Thyroid gland (tissue), 4 donors: ENCODE measurements at regions of chr2 and their contacts with region 1.

Region 1: DNA sequence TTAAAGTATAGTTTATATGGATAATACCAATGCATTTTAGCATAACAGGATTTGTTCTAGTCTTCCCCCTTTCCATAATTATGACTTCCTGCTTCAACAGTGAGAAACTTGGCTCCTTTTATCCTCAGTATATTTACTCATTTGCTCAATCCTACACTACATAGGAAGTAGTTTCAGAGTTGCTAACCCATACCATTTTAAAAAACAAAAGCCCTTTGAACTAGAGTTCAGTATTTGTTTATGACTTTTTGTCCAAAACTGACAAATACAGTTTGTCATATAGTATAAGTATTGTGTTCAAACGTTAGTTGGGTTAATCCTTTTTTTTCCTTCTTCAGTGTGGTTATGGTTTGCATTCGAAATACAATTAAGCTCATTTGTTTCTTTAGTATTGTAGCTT is 5.9 kb upstream of the DNAJC27 start:
- DNase-seq: no peak
- H3K4me3 ChIP-seq: no peak overlapping the region
- H3K27ac ChIP-seq: no peak overlapping the region
- H3K4me1 ChIP-seq: peaks cover 0 to 6% of the 10 kb centered on the region in 2 donors
- H3K27me3 ChIP-seq: no peaks in the 10 kb centered on the region
- CTCF ChIP-seq: no peak
- POLR2A ChIP-seq: no peak

Region 2: GRCh38 chr2:24438106-24438505 is 539.5 kb before region 1 on chr2:
- intact Hi-C with region 1: no loop called
- DNase-seq: no peak
- H3K4me3 ChIP-seq: no peak overlapping the region
- H3K27ac ChIP-seq: no peak overlapping the region
- H3K4me1 ChIP-seq: peaks cover 12 to 16% of the 10 kb centered on the region in 2 donors
- H3K27me3 ChIP-seq: no peaks in the 10 kb centered on the region
- CTCF ChIP-seq: no peak
- POLR2A ChIP-seq: no peak

Region 3: GRCh38 chr2:24920098-24920808 is 57.4 kb before region 1 on chr2 and contains the start of gene ADCY3:
- intact Hi-C with region 1: no loop called
- DNase-seq: peak; percentile 36 to 45
- H3K4me3 ChIP-seq: peak within 1 kb of the TSS in 2 of 3 donors; percentile 42 to 59
- H3K27ac ChIP-seq: peak within 1 kb of the TSS in 2 of 3 donors; percentile 44 to 49
- H3K4me1 ChIP-seq: no peaks in the 10 kb centered on the region
- H3K27me3 ChIP-seq: no peaks in the 10 kb centered on the region
- CTCF ChIP-seq: no peak
- POLR2A ChIP-seq: no peak
- total RNA-seq, gene ADCY3: 17.5 to 38.7 (median 29.2) TPM

Region 4: DNA sequence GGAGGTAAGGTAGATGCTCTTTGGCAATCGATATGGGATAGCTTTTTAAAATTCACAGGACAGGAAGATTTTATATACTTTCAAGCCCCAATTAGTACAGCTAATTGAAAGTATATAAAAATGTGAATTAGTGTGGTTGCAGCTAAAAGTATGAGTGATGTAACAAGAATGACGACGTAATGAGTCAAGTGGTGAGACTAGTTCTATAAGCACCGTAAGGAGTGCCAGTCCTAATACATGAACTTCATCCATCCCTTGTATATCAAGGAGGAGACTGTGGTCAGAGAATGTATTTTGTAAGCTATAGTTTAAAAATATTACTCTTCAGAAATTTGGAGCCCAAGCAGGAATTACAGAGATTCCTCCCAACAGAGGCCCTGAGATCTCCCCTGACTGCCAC is 31.7 kb before region 1 on chr2:
- intact Hi-C with region 1: no loop called
- DNase-seq: no peak
- H3K4me3 ChIP-seq: no peak overlapping the region
- H3K27ac ChIP-seq: no peak overlapping the region
- H3K4me1 ChIP-seq: peaks cover 7 to 10% of the 10 kb centered on the region in 2 donors
- H3K27me3 ChIP-seq: no peaks in the 10 kb centered on the region
- CTCF ChIP-seq: no peak
- POLR2A ChIP-seq: no peak

Region 5: GRCh38 chr2:25044990-25045389 is 67.4 kb after region 1 on chr2:
- intact Hi-C with region 1: loop called (anchors 5 kb)
- DNase-seq: peak; percentile 83 to 86
- H3K4me3 ChIP-seq: no peak overlapping the region
- H3K27ac ChIP-seq: peak overlapping the region in 1 of 3 donors; percentile 45
- H3K4me1 ChIP-seq: peaks cover 0 to 29% of the 10 kb centered on the region in 2 donors
- H3K27me3 ChIP-seq: no peaks in the 10 kb centered on the region
- CTCF ChIP-seq: no peak
- POLR2A ChIP-seq: no peak

Region 6: DNA sequence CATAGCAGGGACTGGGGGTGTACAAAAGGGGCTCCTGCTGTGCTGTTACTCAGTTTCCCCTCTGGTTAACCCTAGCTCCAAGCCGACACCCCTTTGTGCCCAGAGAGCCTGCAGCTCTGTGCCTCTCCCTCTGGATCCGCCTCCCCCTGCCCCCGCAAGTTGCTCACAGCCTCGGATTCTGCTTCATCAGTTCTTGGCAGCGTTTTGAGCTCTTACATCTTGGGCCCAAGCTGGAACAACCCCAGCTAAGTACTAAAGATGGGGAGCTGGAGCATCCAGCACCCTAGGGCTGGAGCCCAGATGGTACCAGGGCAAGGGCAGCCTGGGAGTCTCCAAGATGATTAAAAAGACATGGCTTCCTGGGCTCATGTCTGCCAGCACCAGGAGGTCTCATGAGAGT is 150.0 kb after region 1 on chr2:
- intact Hi-C with region 1: loop called (anchors 2 kb)
- DNase-seq: peak in 1 of 2 donors; percentile 20
- H3K4me3 ChIP-seq: no peak overlapping the region
- H3K27ac ChIP-seq: no peak overlapping the region
- H3K4me1 ChIP-seq: no peaks in the 10 kb centered on the region
- H3K27me3 ChIP-seq: no peaks in the 10 kb centered on the region
- CTCF ChIP-seq: no peak
- POLR2A ChIP-seq: no peak